CD8-positive, alpha-beta T cell (primary cell): ENCODE measurements at regions of chr1 and their contacts with region 1.

Region 1: DNA sequence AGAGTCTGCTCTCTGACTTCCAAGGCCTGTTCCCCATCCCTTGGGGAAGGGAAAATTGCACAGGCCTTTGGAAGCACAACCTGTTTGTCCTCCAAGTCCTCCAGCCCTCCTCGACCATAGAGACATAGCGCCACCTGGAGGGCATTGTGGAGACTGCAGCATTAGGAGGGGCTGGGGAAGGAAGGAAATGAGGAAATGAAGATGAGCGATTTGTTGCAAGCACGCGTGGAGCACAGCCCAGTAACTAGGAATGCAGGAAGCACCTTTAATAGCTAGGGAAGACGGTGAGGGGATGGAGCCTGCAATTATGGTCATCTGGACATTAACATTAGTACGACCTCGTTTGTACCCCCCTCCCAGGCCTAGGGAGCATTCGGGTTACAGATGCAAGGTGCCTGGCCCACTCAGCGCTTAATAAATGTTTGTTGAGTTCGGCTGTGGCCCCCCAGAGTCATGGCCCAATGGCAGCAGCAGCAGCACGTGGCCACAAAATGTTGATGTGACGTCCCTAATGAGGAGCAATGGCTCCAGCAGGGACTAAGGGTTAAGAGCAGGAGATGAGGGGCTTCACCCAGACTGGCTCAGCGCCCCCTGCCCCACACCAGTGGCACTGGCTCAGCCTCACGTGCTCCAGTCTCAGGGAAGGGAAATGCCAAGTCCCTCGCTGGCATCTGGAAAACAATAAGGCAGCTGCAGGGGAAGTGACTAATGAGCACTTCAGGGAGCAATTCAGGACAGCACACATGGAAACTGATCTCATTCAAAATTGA is 8.0 kb upstream of the CAMK2N1 start:
- DNase-seq: peak; percentile 66 to 92 (median 83)
- ATAC-seq: peak; percentile 90
- H3K4me3 ChIP-seq: no peak overlapping the region
- H3K4me3 Mint-ChIP-seq: no peak overlapping the region
- H3K27ac ChIP-seq: no peak overlapping the region
- H3K27ac Mint-ChIP-seq: no peak overlapping the region
- H3K4me1 ChIP-seq: peaks cover 7% of the 10 kb centered on the region
- H3K4me1 Mint-ChIP-seq: peaks cover 3% of the 10 kb centered on the region
- H3K27me3 ChIP-seq: no peaks in the 10 kb centered on the region
- H3K27me3 Mint-ChIP-seq: no peaks in the 10 kb centered on the region
- CTCF ChIP-seq: peak; percentile 87

Region 2: DNA sequence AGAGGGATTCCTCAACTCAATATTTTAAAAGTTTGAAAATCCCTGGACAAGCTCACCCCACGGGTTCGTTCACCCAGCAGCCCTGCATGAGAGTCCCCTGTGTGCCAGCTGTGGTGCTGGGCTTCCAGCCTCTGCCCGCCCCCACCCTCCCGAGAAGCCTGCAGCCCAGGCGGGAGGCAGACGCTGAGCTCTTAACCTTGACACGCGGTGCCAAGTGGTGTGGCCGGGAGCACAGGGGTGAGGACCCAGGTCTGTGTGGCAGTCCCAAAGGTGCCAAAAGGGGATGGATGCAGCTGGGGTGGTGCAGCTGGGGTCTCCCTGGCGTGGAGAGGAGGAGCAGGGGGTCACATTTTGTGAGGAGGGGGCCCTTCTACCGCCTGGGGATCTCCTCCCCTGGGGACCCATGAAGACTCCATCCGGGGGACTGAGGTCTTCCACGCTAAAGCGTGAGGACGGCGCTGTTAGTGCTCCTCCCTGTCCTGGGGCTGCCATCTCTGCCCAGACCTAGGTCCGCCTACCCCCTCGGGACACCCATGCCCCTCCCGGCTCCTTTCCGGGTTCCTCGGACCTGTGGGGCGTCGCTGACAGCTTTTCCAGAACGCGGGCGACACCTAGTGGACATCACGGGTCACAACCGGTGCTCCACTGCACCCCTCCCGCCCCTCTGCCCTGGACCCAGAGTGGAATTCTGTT is 342.0 kb before region 1 on chr1:
- CTCF ChIA-PET with region 1: interaction called, 3 read pairs
- POLR2A ChIA-PET with region 1: no interaction called
- intact Hi-C with region 1: loop called in 1 of 2 experiments (anchors 2 kb)
- DNase-seq: peak; percentile 56 to 88 (median 79)
- ATAC-seq: peak; percentile 94
- H3K4me3 ChIP-seq: peak overlapping the region; percentile 46 to 53
- H3K4me3 Mint-ChIP-seq: peak overlapping the region; percentile 79
- H3K27ac ChIP-seq: no peak overlapping the region
- H3K27ac Mint-ChIP-seq: no peak overlapping the region
- H3K4me1 ChIP-seq: peaks cover 6% of the 10 kb centered on the region
- H3K4me1 Mint-ChIP-seq: peaks cover 9% of the 10 kb centered on the region
- H3K27me3 ChIP-seq: no peaks in the 10 kb centered on the region
- H3K27me3 Mint-ChIP-seq: no peaks in the 10 kb centered on the region
- CTCF ChIP-seq: peak; percentile 86

Region 3: GRCh38 chr1:20233394-20233793 is 260.6 kb before region 1 on chr1:
- CTCF ChIA-PET with region 1: interaction called, 3 read pairs
- POLR2A ChIA-PET with region 1: no interaction called
- intact Hi-C with region 1: loop called in 1 of 2 experiments (anchors 5 kb)
- DNase-seq: peak in 2 of 9 experiments; percentile 15 to 36
- ATAC-seq: no peak
- H3K4me3 ChIP-seq: no peak overlapping the region
- H3K4me3 Mint-ChIP-seq: no peak overlapping the region
- H3K27ac ChIP-seq: no peak overlapping the region
- H3K27ac Mint-ChIP-seq: no peak overlapping the region
- H3K4me1 ChIP-seq: no peaks in the 10 kb centered on the region
- H3K4me1 Mint-ChIP-seq: no peaks in the 10 kb centered on the region
- H3K27me3 ChIP-seq: peaks cover 0 to 4% of the 10 kb centered on the region in 2 experiments
- H3K27me3 Mint-ChIP-seq: peaks cover 45% of the 10 kb centered on the region
- CTCF ChIP-seq: peak; percentile 26

Region 4: DNA sequence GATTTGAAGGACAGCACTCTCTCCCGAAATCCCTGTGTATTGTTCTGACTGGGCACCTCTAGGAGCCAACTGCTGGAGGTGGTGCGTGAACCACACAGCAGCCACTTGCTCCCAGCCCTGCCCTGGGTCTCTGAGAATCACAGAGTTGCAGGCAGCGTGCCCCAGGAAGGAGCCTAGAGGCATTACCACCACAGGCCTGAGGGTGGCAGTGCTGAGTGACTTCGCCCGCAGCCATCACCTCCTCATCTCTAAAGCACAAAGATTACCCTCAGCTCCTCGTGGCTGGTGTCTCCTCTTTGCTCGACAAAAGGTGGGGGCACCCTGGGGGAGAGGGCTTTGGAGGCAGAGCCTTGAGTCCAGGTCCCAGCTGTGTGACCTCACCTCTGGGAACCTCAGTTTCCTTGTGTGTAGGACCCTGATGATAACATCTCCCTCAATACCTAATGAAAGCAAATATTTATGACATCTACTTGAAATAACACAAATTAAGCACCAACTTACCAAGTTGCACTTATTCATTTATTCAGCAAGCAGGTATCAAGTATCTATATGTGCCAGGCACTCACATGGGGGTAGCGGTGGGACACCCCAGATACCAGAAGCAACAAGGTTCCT is 117.0 kb before region 1 on chr1:
- CTCF ChIA-PET with region 1: interaction called, 34 read pairs
- POLR2A ChIA-PET with region 1: no interaction called
- intact Hi-C with region 1: loop called in 1 of 2 experiments (anchors 1 kb)
- DNase-seq: peak; percentile 10 to 66 (median 53)
- ATAC-seq: peak; percentile 80
- H3K4me3 ChIP-seq: no peak overlapping the region
- H3K4me3 Mint-ChIP-seq: no peak overlapping the region
- H3K27ac ChIP-seq: no peak overlapping the region
- H3K27ac Mint-ChIP-seq: no peak overlapping the region
- H3K4me1 ChIP-seq: no peaks in the 10 kb centered on the region
- H3K4me1 Mint-ChIP-seq: no peaks in the 10 kb centered on the region
- H3K27me3 ChIP-seq: peaks cover 0 to 3% of the 10 kb centered on the region in 2 experiments
- H3K27me3 Mint-ChIP-seq: peaks cover 44% of the 10 kb centered on the region
- CTCF ChIP-seq: peak; percentile 60

Region 5: DNA sequence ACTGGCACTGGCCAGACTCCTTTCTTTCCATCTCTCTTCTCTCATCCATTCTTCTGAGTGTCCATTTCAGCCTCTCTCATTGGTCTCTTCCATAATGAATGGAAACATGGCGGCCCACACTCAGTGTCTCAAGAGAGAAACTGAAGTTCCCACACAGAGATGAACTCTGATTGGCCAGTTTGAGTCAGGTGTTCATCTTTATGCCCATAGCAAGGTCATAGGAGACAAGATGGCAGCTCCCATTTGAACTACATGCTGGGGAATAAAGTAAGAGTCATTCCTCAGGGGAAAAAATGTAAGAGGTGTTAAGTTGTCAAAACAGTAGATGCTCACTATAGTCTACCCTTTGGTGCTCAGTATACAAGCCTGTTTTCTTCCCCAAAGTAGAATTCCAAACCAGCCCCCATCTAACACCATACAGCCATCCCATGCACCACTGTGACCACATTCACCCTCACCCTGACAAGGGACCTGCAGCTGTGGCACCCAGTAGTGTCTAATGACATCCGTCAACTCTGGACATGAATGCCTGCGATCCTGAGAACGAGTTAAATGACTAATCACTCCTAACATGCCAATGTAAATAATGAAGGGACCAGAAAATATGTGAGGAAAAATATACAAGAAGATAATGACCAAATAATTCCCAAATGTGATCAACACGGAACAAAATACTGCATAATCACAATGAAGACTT is 107.3 kb after region 1 on chr1:
- CTCF ChIA-PET with region 1: no interaction called
- POLR2A ChIA-PET with region 1: no interaction called
- intact Hi-C with region 1: no loop called
- DNase-seq: no peak
- ATAC-seq: no peak
- H3K4me3 ChIP-seq: no peak overlapping the region
- H3K4me3 Mint-ChIP-seq: no peak overlapping the region
- H3K27ac ChIP-seq: no peak overlapping the region
- H3K27ac Mint-ChIP-seq: no peak overlapping the region
- H3K4me1 ChIP-seq: no peaks in the 10 kb centered on the region
- H3K4me1 Mint-ChIP-seq: no peaks in the 10 kb centered on the region
- H3K27me3 ChIP-seq: no peaks in the 10 kb centered on the region
- H3K27me3 Mint-ChIP-seq: peaks cover 8% of the 10 kb centered on the region
- CTCF ChIP-seq: no peak